ENCODE measurements at regions of chr1 and their contacts with region 1.

Region 1: GRCh38 chr1:201408176-201408833 is 9.2 kb upstream of the LAD1 start:
- DNase-seq: peak; percentile 43
- H3K4me3 ChIP-seq: no peak overlapping the region
- H3K27ac ChIP-seq: no peak overlapping the region
- H3K27me3 ChIP-seq: peaks cover 56% of the 10 kb centered on the region
- CTCF ChIP-seq: peak; percentile 99

Region 2: DNA sequence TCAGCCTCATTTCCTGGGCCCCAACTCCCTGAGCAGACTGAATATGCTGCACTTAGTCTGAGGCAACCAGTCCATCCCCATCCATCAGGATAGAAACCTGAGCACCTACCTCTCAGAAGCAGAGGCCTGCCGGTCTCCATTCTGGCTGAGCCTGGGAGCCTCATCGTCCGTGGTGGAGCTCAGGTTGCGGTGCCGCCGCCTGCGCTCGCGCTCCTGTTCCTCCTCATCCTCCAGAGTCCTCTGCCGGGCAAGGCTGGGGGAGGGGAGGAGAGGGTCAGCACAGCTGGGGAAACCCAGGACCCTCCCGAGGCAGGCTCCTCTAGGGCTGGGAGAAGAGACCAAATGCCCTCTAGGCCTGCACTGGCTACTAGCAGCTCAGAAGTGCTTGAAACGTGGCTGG is 19.3 kb before region 1 on chr1:
- CTCF ChIA-PET with region 1: interaction called, 15 read pairs
- POLR2A ChIA-PET with region 1: no interaction called
- DNase-seq: no peak
- H3K4me3 ChIP-seq: no peak overlapping the region
- H3K27ac ChIP-seq: no peak overlapping the region
- H3K27me3 ChIP-seq: peaks cover 25% of the 10 kb centered on the region
- CTCF ChIP-seq: no peak

Region 3: DNA sequence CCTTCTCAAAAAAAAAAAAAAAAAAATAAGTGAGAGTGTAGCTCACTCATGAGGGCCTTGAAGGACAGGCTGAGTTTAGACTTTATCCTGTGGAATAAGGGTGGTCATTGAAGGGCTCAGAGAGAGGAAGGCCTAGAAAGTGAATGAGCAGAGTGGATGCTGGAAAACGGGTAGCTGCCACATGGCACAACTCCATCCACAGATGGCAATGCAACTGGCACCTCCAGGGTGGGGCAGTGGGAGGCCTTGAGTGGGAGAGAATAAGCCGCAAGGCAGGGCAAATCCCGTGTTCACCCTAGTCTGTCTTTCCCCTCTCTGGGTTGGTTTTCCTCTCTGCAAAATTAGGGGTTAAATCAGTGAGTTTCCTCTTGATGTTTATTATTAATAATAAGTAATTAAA is 10.2 kb after region 1 on chr1:
- CTCF ChIA-PET with region 1: interaction called, 12 read pairs
- POLR2A ChIA-PET with region 1: no interaction called
- DNase-seq: no peak
- H3K4me3 ChIP-seq: no peak overlapping the region
- H3K27ac ChIP-seq: no peak overlapping the region
- H3K27me3 ChIP-seq: peaks cover 50% of the 10 kb centered on the region
- CTCF ChIP-seq: no peak

Measured in AG04450 (cell line).